Heart left ventricle (tissue), 16 donors: ENCODE measurements at regions of chr11 and their contacts with region 1.

Region 1: GRCh38 chr11:64976651-64977050 is 4.7 kb upstream of the MAJIN start:
- DNase-seq: no peak
- ATAC-seq: no peak
- H3K4me3 ChIP-seq: no peak overlapping the region
- H3K27ac ChIP-seq: no peak overlapping the region
- H3K4me1 ChIP-seq: peaks cover 0 to 9% (median 7%) of the 10 kb centered on the region in 12 donors
- H3K27me3 ChIP-seq: peaks cover 0 to 3% (median 0%) of the 10 kb centered on the region in 9 donors
- CTCF ChIP-seq: no peak
- POLR2A ChIP-seq: no peak

Region 2: GRCh38 chr11:64924102-64924851 is 52.4 kb before region 1 on chr11 and contains the start of gene PPP2R5B:
- intact Hi-C with region 1: loop called in 1 of 10 experiments (anchors 5 kb)
- DNase-seq: peak; percentile 96 to 97 (median 96)
- ATAC-seq: peak; percentile 96 to 98 (median 98)
- H3K4me3 ChIP-seq: peak within 1 kb of the TSS; percentile 56 to 100 (median 96)
- H3K27ac ChIP-seq: peak within 1 kb of the TSS; percentile 71 to 99 (median 96)
- H3K4me1 ChIP-seq: peaks cover 0 to 39% (median 25%) of the 10 kb centered on the region in 12 donors
- H3K27me3 ChIP-seq: no peaks in the 10 kb centered on the region
- CTCF ChIP-seq: no peak
- POLR2A ChIP-seq: peak in 1 of 2 donors; percentile 87
- total RNA-seq, gene PPP2R5B: 17.5 to 32.5 (median 22.3) TPM

Region 3: DNA sequence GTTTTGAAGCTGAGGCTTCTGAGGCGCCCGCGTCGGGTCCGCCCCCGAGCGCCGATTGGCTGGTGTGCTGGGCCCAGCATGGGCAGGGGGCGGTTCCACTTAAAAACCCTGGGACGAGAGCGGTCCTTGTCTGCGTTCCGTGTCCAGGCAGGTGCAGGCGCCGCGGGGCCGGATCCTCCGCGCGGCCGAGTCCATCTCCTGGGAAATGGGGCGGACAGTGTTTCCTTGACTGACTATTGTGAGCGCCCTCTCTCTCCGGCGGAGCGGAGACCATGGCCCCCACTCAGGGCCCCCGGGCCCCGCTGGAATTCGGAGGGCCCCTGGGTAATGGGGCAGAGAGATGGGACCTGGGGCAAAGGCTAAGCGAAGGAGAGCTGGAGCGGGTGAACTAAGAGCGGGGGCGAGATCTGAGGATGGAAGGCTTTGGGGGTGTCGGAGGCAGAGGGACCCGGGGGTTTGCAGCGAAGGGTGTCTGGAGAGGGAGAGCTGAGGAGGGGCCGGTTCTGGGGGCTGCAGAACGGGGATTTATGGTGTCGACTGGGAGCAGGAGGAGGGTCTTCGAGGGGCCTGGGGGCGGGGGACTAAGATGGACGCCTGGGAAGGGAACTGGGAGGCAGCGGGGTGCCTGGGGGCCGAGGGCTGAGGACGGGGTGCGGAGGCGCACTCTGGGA is 135.2 kb after region 1 on chr11 and contains the start of gene TM7SF2:
- intact Hi-C with region 1: no loop called
- DNase-seq: peak; percentile 96 to 98 (median 97)
- ATAC-seq: peak; percentile 85 to 93 (median 86)
- H3K4me3 ChIP-seq: peak within 1 kb of the TSS; percentile 38 to 90 (median 61)
- H3K27ac ChIP-seq: peak within 1 kb of the TSS in 11 of 12 donors; percentile 52 to 86 (median 79)
- H3K4me1 ChIP-seq: peaks cover 0 to 62% (median 43%) of the 10 kb centered on the region in 12 donors
- H3K27me3 ChIP-seq: peaks cover 0 to 5% (median 0%) of the 10 kb centered on the region in 9 donors
- CTCF ChIP-seq: no peak
- POLR2A ChIP-seq: peak; percentile 73 to 96
- total RNA-seq, gene TM7SF2: 25.1 to 752 (median 78.6) TPM